ENCODE measurements at regions of chr5 and their contacts with region 1.

Region 1: GRCh38 chr5:91280362-91281269 is 102.5 kb downstream of the ARRDC3 start:
- DNase-seq: peak; percentile 89 to 91
- H3K4me3 ChIP-seq: peak overlapping the region; percentile 48
- H3K4me3 Mint-ChIP-seq: peak overlapping the region; percentile 88
- H3K27ac Mint-ChIP-seq: peak overlapping the region; percentile 79
- H3K4me1 ChIP-seq: peaks cover 13% of the 10 kb centered on the region; the same call in 1 of the 2 replicates
- H3K4me1 Mint-ChIP-seq: peaks cover 8% of the 10 kb centered on the region
- H3K27me3 ChIP-seq: no peaks in the 10 kb centered on the region
- H3K27me3 Mint-ChIP-seq: no peaks in the 10 kb centered on the region
- CTCF ChIP-seq: no peak

Region 2: GRCh38 chr5:91176288-91177016 is 104.2 kb before region 1 on chr5:
- CTCF ChIA-PET with region 1: no interaction called
- POLR2A ChIA-PET with region 1: no interaction called
- intact Hi-C with region 1: no loop called
- DNase-seq: peak in 1 of 2 experiments; percentile 34
- H3K4me3 ChIP-seq: no peak overlapping the region
- H3K4me3 Mint-ChIP-seq: no peak overlapping the region
- H3K27ac Mint-ChIP-seq: peak overlapping the region; percentile 61
- H3K4me1 ChIP-seq: peaks cover 15% of the 10 kb centered on the region
- H3K4me1 Mint-ChIP-seq: peaks cover 10% of the 10 kb centered on the region
- H3K27me3 ChIP-seq: no peaks in the 10 kb centered on the region
- H3K27me3 Mint-ChIP-seq: no peaks in the 10 kb centered on the region
- CTCF ChIP-seq: no peak

Region 3: GRCh38 chr5:91225848-91226686 is 54.5 kb before region 1 on chr5:
- CTCF ChIA-PET with region 1: no interaction called
- POLR2A ChIA-PET with region 1: interaction called, 3 read pairs
- intact Hi-C with region 1: loop called (anchors 2 kb)
- DNase-seq: peak; percentile 61 to 72
- H3K4me3 ChIP-seq: no peak overlapping the region
- H3K4me3 Mint-ChIP-seq: no peak overlapping the region
- H3K27ac Mint-ChIP-seq: no peak overlapping the region
- H3K4me1 ChIP-seq: peaks cover 10% of the 10 kb centered on the region
- H3K4me1 Mint-ChIP-seq: peaks cover 9% of the 10 kb centered on the region
- H3K27me3 ChIP-seq: no peaks in the 10 kb centered on the region
- H3K27me3 Mint-ChIP-seq: no peaks in the 10 kb centered on the region
- CTCF ChIP-seq: peak; percentile 56 to 64

Region 4: DNA sequence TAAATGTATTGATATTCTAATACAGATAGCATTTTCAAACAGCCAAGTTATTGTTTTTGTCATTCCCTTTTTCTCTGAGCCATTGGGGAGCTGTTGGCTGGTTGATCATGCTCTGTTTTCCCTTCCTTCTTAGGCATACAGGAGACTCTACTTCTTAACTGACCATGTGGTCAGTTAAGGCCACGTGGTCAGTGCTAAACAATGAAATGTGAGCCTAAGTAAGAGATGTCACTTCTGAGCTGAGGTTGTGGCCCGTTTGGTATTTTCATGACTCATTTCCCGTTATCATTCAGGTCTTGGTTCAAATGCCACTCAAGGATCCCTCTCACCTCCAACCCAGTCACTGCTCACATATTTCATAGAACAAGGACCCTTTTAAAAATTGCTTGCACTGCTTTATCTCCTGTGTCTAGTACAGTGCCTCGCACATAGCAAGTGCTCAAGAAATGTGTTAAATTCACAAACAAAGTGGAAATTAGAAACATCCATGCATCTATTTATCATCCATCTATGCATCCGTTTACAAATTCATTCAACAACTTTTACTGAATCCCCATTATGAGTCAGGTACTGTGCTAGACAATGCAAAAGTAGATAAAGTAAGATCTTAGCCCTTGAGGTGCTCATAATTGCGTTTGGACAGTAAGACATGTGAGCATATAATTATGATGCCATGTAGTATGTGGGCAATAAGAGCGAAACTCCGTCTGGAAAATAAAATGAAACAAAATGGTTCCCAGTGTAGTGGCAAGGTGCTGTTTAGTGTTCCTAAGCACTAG is 51.8 kb after region 1 on chr5:
- CTCF ChIA-PET with region 1: no interaction called
- POLR2A ChIA-PET with region 1: no interaction called
- intact Hi-C with region 1: loop called (anchors 2 kb)
- DNase-seq: peak; percentile 16 to 47
- H3K4me3 ChIP-seq: no peak overlapping the region
- H3K4me3 Mint-ChIP-seq: no peak overlapping the region
- H3K27ac Mint-ChIP-seq: peak overlapping the region; percentile 3
- H3K4me1 ChIP-seq: peaks cover 17% of the 10 kb centered on the region
- H3K4me1 Mint-ChIP-seq: peaks cover 22% of the 10 kb centered on the region
- H3K27me3 ChIP-seq: no peaks in the 10 kb centered on the region
- H3K27me3 Mint-ChIP-seq: no peaks in the 10 kb centered on the region
- CTCF ChIP-seq: no peak

Region 5: GRCh38 chr5:91357012-91357813 is 76.6 kb after region 1 on chr5:
- CTCF ChIA-PET with region 1: no interaction called
- POLR2A ChIA-PET with region 1: no interaction called
- intact Hi-C with region 1: loop called (anchors 1 kb)
- DNase-seq: peak; percentile 24 to 55
- H3K4me3 ChIP-seq: no peak overlapping the region
- H3K4me3 Mint-ChIP-seq: peak overlapping the region; percentile 47
- H3K27ac Mint-ChIP-seq: no peak overlapping the region
- H3K4me1 ChIP-seq: peaks cover 9% of the 10 kb centered on the region
- H3K4me1 Mint-ChIP-seq: peaks cover 16% of the 10 kb centered on the region
- H3K27me3 ChIP-seq: no peaks in the 10 kb centered on the region
- H3K27me3 Mint-ChIP-seq: no peaks in the 10 kb centered on the region
- CTCF ChIP-seq: no peak